ENCODE measurements at regions of chr2 and their contacts with region 1.

Region 1: DNA sequence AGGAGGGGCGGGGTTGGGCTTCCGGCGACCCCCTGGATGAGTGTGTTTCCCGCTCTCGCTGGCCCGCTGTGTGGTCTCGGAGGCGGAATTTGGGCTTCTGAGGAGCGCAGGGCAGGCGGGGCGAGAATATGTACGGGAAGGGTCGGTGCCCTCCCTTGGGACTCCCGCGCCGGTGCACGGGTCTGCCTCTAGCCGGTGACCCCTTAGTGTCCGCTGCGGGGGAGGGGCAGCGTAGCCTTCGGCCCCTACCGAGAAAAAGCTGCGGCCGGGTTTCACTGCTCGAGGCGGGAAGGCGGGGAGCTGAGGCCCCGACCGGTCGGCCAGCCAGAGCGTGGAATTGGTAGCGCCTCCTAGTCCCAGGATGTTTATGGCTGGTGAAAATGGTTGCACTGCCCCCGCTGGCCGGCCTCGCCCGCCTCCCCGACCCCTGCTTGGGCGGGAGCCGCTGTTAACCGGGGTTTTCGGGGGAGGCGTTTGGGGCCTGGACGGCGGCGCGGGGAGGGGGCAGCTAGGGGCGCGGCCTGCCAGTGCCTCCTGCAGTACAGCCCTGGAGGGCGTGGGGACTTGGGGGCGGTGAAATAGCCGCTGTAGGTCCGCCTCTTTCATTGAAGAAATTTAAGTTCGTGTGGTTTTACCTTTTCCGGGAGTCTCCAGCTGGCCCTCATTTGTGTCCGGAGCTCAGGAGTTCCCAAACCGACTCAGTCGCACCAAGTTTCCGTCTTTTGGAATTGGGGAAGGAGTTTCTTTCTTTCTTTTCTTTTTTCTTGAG is at the start of gene UGP2:
- DNase-seq: peak; percentile 95 to 96
- H3K4me3 ChIP-seq: peak within 1 kb of the TSS; percentile 95
- H3K4me3 Mint-ChIP-seq: peak within 1 kb of the TSS; percentile 97
- H3K27ac Mint-ChIP-seq: peak within 1 kb of the TSS; percentile 97
- H3K4me1 ChIP-seq: peaks cover 33% of the 10 kb centered on the region
- H3K4me1 Mint-ChIP-seq: peaks cover 11% of the 10 kb centered on the region
- H3K27me3 ChIP-seq: no peaks in the 10 kb centered on the region
- H3K27me3 Mint-ChIP-seq: no peaks in the 10 kb centered on the region
- CTCF ChIP-seq: peak in 1 of 2 experiments; percentile 37
- total RNA-seq, gene UGP2: 288 and 307 TPM in 2 replicates

Region 2: GRCh38 chr2:63588385-63589147 is 252.9 kb before region 1 on chr2 and contains the starts of genes MDH1 and WDPCP:
- CTCF ChIA-PET with region 1: no interaction called
- POLR2A ChIA-PET with region 1: interaction called, 10 read pairs
- intact Hi-C with region 1: loop called (anchors 1 kb)
- DNase-seq: peak; percentile 96 to 99
- H3K4me3 ChIP-seq: peak within 1 kb of the TSS; percentile 95
- H3K4me3 Mint-ChIP-seq: peak within 1 kb of the TSS; percentile 92
- H3K27ac Mint-ChIP-seq: peak within 1 kb of the TSS; percentile 96
- H3K4me1 ChIP-seq: 0 out of 2 replicates have a peak, but pooled peaks cover 7% of the 10 kb centered on the region
- H3K4me1 Mint-ChIP-seq: peaks cover 11% of the 10 kb centered on the region
- H3K27me3 ChIP-seq: no peaks in the 10 kb centered on the region
- H3K27me3 Mint-ChIP-seq: no peaks in the 10 kb centered on the region
- CTCF ChIP-seq: no peak
- total RNA-seq, gene MDH1: 159 and 181 TPM in 2 replicates
- total RNA-seq, gene WDPCP: 14.1 and 16.2 TPM in 2 replicates

Region 3: GRCh38 chr2:63614983-63615945 is 226.2 kb before region 1 on chr2:
- CTCF ChIA-PET with region 1: no interaction called
- POLR2A ChIA-PET with region 1: interaction called, 11 read pairs
- intact Hi-C with region 1: loop called (anchors 5 kb)
- DNase-seq: peak; percentile 78 to 87
- H3K4me3 ChIP-seq: peak overlapping the region; percentile 35
- H3K4me3 Mint-ChIP-seq: peak overlapping the region; percentile 67
- H3K27ac Mint-ChIP-seq: peak overlapping the region; percentile 95
- H3K4me1 ChIP-seq: peaks cover 43% of the 10 kb centered on the region
- H3K4me1 Mint-ChIP-seq: peaks cover 44% of the 10 kb centered on the region
- H3K27me3 ChIP-seq: no peaks in the 10 kb centered on the region
- H3K27me3 Mint-ChIP-seq: no peaks in the 10 kb centered on the region
- CTCF ChIP-seq: no peak

Region 4: DNA sequence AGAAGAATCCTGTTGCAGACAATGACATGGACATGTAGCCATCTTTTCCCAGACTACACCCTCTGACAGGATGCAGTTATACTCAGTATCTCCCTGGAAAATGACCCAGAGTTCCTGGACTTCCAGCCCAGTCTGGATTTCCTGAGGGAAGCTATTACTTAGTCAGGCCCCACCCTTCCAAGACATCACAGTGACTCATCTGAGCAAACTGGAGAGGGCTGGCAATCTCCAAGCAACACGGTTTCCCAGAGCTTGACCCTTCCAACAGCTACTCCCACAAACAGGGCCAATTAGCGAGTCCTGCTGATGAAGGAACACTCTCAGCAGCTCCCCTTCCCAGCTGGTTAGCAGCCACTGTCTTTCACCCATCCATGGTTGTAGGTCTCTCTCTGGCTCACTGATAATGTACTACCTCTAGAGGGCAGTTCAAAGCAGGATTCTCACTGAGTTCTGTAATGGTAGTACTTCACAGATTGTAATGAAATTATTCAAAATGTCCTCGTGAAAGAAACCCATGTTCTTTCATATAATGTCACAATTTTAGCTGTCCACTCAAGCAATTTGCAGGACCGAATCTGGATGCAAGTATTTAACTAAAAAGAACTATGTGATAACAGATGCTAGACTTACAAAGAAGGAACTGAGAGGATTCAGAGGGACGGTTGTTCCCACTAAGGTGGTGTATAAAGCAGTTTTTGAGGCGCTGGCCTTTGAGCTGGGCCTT is 142.5 kb before region 1 on chr2:
- CTCF ChIA-PET with region 1: interaction called, 16 read pairs
- POLR2A ChIA-PET with region 1: interaction called, 5 read pairs
- intact Hi-C with region 1: loop called (anchors 1 kb)
- DNase-seq: peak; percentile 62 to 69
- H3K4me3 ChIP-seq: no peak overlapping the region
- H3K4me3 Mint-ChIP-seq: no peak overlapping the region
- H3K27ac Mint-ChIP-seq: peak overlapping the region; percentile 34
- H3K4me1 ChIP-seq: peaks cover 8% of the 10 kb centered on the region
- H3K4me1 Mint-ChIP-seq: peaks cover 9% of the 10 kb centered on the region
- H3K27me3 ChIP-seq: no peaks in the 10 kb centered on the region
- H3K27me3 Mint-ChIP-seq: no peaks in the 10 kb centered on the region
- CTCF ChIP-seq: peak; percentile 57 to 65

Region 5: GRCh38 chr2:63736354-63736753 is 105.1 kb before region 1 on chr2:
- CTCF ChIA-PET with region 1: no interaction called
- POLR2A ChIA-PET with region 1: interaction called, 16 read pairs
- intact Hi-C with region 1: loop called (anchors 1 kb)
- DNase-seq: no peak
- H3K4me3 ChIP-seq: no peak overlapping the region
- H3K4me3 Mint-ChIP-seq: no peak overlapping the region
- H3K27ac Mint-ChIP-seq: no peak overlapping the region
- H3K4me1 ChIP-seq: peaks cover 64% of the 10 kb centered on the region
- H3K4me1 Mint-ChIP-seq: peaks cover 46% of the 10 kb centered on the region
- H3K27me3 ChIP-seq: no peaks in the 10 kb centered on the region
- H3K27me3 Mint-ChIP-seq: no peaks in the 10 kb centered on the region
- CTCF ChIP-seq: no peak

Region 6: DNA sequence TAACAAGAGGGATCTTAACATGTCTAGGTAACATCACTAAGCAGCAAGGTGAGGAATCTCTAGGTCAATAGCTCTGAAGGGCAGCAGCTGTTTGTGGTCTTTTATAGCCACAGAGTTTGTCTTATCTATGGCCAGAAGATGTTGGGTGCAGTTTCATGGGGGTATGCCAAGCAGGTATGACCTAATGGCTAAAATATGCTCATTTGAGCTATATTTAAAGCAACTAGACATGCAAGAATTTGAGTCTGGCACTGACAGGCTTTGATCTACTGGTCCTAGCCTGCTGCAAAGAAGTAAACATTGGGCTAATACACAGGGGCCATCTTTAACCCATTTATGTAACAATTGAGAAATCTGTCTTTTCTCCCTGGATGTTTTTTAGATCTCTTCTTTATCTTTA is 13.7 kb before region 1 on chr2:
- CTCF ChIA-PET with region 1: interaction called, 9 read pairs
- POLR2A ChIA-PET with region 1: interaction called, 99 read pairs
- intact Hi-C with region 1: loop called (anchors 1 kb)
- DNase-seq: peak; percentile 86 to 90
- H3K4me3 ChIP-seq: no peak overlapping the region
- H3K4me3 Mint-ChIP-seq: peak overlapping the region; percentile 77
- H3K27ac Mint-ChIP-seq: peak overlapping the region; percentile 93
- H3K4me1 ChIP-seq: peaks cover 43% of the 10 kb centered on the region
- H3K4me1 Mint-ChIP-seq: peaks cover 54% of the 10 kb centered on the region
- H3K27me3 ChIP-seq: no peaks in the 10 kb centered on the region
- H3K27me3 Mint-ChIP-seq: no peaks in the 10 kb centered on the region
- CTCF ChIP-seq: no peak

Measured in Caco-2 (cell line).